Sigmoid colon (tissue), 7 donors: ENCODE measurements at regions of chr4 and their contacts with region 1.

Region 1: GRCh38 chr4:106369456-106370060 is 980 bp upstream of the GIMD1 start:
- DNase-seq: no peak
- H3K4me3 ChIP-seq: no peak overlapping the region
- H3K27ac ChIP-seq: no peak overlapping the region
- H3K4me1 ChIP-seq: peaks cover 0 to 17% (median 15%) of the 10 kb centered on the region in 4 donors
- H3K27me3 ChIP-seq: no peaks in the 10 kb centered on the region
- CTCF ChIP-seq: peak; percentile 49 to 68 (median 63)
- EP300 ChIP-seq: no peak
- POLR2A ChIP-seq: no peak

Region 2: DNA sequence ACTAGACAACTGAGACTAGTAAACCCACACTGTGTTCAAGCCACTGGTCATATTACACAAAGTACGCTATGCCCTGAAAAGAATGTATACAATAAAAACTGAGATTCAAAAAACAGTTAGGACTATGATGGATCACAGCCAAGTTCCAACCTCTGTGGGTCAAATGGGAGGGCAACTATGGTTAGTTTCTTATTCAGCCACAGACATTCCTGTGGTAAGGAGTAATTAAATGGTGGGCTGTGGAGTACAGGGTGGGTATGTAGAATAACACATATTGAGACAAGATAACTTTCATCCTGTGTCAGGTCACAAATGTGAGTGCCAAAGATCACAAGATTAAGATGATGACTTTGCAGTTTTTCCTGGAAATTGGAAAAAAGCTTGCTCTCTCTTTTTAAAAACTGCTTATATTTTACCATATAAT is 307.1 kb before region 1 on chr4:
- intact Hi-C with region 1: no loop called
- DNase-seq: no peak
- H3K4me3 ChIP-seq: no peak overlapping the region
- H3K27ac ChIP-seq: peak overlapping the region in 2 of 4 donors; percentile 6 to 9
- H3K4me1 ChIP-seq: peaks cover 0 to 23% (median 16%) of the 10 kb centered on the region in 4 donors
- H3K27me3 ChIP-seq: no peaks in the 10 kb centered on the region
- CTCF ChIP-seq: no peak
- EP300 ChIP-seq: no peak
- POLR2A ChIP-seq: no peak

Region 3: GRCh38 chr4:106809076-106809475 is 439.5 kb after region 1 on chr4:
- intact Hi-C with region 1: loop called (anchors 2 kb)
- DNase-seq: no peak
- H3K4me3 ChIP-seq: no peak overlapping the region
- H3K27ac ChIP-seq: no peak overlapping the region
- H3K4me1 ChIP-seq: no peaks in the 10 kb centered on the region
- H3K27me3 ChIP-seq: no peaks in the 10 kb centered on the region
- CTCF ChIP-seq: peak; percentile 11 to 59 (median 35)
- EP300 ChIP-seq: no peak
- POLR2A ChIP-seq: no peak

Region 4: GRCh38 chr4:107519053-107519452 is 1149.5 kb after region 1 on chr4:
- intact Hi-C with region 1: loop called (anchors 10 kb)
- DNase-seq: no peak
- H3K4me3 ChIP-seq: no peak overlapping the region
- H3K27ac ChIP-seq: no peak overlapping the region
- H3K4me1 ChIP-seq: no peaks in the 10 kb centered on the region
- H3K27me3 ChIP-seq: no peaks in the 10 kb centered on the region
- CTCF ChIP-seq: peak in 3 of 4 experiments; percentile 19 to 48 (median 22)
- EP300 ChIP-seq: no peak
- POLR2A ChIP-seq: no peak